Naive thymus-derived CD4-positive, alpha-beta T cell (primary cell): ENCODE measurements at regions of chr12 and their contacts with region 1.

Region 1: GRCh38 chr12:93879476-93880421 is 202.6 kb downstream of the CRADD start:
- DNase-seq: no peak
- ATAC-seq: no peak
- H3K4me3 ChIP-seq: no peak overlapping the region
- H3K4me3 Mint-ChIP-seq: peak overlapping the region in 5 of 10 donors; percentile 5 to 71 (median 39)
- H3K27ac ChIP-seq: no peak overlapping the region
- H3K27ac Mint-ChIP-seq: peak overlapping the region in 8 of 9 donors; percentile 53 to 94 (median 72)
- H3K4me1 ChIP-seq: peaks cover 0 to 9% of the 10 kb centered on the region in 2 donors
- H3K4me1 Mint-ChIP-seq: peaks cover 7 to 39% (median 19%) of the 10 kb centered on the region in 7 donors
- H3K27me3 ChIP-seq: no peaks in the 10 kb centered on the region
- H3K27me3 Mint-ChIP-seq: peaks cover 0 to 3% (median 0%) of the 10 kb centered on the region in 5 donors

Region 2: DNA sequence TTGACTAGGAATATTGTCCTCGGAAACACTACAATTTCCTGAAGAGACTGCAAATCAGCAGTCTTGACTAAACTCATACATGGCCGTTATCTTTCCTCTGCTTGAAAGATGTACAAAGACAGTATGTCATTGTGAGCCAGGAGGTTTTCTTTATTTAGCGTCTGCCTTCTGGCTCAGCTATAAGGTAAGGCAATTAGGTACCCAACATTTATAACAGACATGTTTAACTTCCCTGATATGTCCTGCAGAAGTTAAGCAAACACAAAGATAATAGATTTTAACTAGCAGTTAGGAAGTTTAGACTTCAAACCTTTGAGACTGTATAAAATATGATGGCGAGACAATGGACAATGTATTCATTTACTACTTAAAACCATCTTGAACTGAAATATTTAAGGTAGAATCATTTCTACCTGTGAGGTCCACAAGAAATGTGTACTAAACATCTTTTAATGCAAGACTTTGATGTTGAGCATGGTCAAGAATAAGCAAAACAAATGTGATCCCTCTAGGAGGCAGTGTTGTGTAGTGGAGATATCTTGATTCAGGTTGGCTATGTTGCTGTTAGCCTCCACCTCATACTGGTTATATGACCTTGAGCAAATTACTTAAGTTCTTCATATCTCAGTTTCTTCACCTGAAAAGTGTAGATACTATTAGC is 854.5 kb before region 1 on chr12:
- CTCF ChIA-PET with region 1: no interaction called
- POLR2A ChIA-PET with region 1: no interaction called
- intact Hi-C with region 1: no loop called
- DNase-seq: peak in 3 of 9 donors; percentile 2 to 15 (median 4)
- ATAC-seq: peak; percentile 56
- H3K4me3 ChIP-seq: no peak overlapping the region
- H3K4me3 Mint-ChIP-seq: no peak overlapping the region
- H3K27ac ChIP-seq: no peak overlapping the region
- H3K27ac Mint-ChIP-seq: no peak overlapping the region
- H3K4me1 ChIP-seq: no peaks in the 10 kb centered on the region
- H3K4me1 Mint-ChIP-seq: no peaks in the 10 kb centered on the region
- H3K27me3 ChIP-seq: no peaks in the 10 kb centered on the region
- H3K27me3 Mint-ChIP-seq: peaks cover 0 to 3% (median 0%) of the 10 kb centered on the region in 5 donors

Region 3: GRCh38 chr12:93302331-93303229 is 577.2 kb before region 1 on chr12:
- CTCF ChIA-PET with region 1: no interaction called
- POLR2A ChIA-PET with region 1: no interaction called
- intact Hi-C with region 1: no loop called
- DNase-seq: no peak
- ATAC-seq: no peak
- H3K4me3 ChIP-seq: no peak overlapping the region
- H3K4me3 Mint-ChIP-seq: no peak overlapping the region
- H3K27ac ChIP-seq: no peak overlapping the region
- H3K27ac Mint-ChIP-seq: no peak overlapping the region
- H3K4me1 ChIP-seq: no peaks in the 10 kb centered on the region
- H3K4me1 Mint-ChIP-seq: no peaks in the 10 kb centered on the region
- H3K27me3 ChIP-seq: no peaks in the 10 kb centered on the region
- H3K27me3 Mint-ChIP-seq: peaks cover 0 to 5% (median 0%) of the 10 kb centered on the region in 5 donors

Region 4: GRCh38 chr12:93336291-93336741 is 543.4 kb before region 1 on chr12:
- CTCF ChIA-PET with region 1: no interaction called
- POLR2A ChIA-PET with region 1: no interaction called
- intact Hi-C with region 1: no loop called
- DNase-seq: no peak
- ATAC-seq: no peak
- H3K4me3 ChIP-seq: no peak overlapping the region
- H3K4me3 Mint-ChIP-seq: no peak overlapping the region
- H3K27ac ChIP-seq: no peak overlapping the region
- H3K27ac Mint-ChIP-seq: no peak overlapping the region
- H3K4me1 ChIP-seq: no peaks in the 10 kb centered on the region
- H3K4me1 Mint-ChIP-seq: no peaks in the 10 kb centered on the region
- H3K27me3 ChIP-seq: no peaks in the 10 kb centered on the region
- H3K27me3 Mint-ChIP-seq: no peaks in the 10 kb centered on the region

Region 5: GRCh38 chr12:93624595-93625294 is 255.0 kb before region 1 on chr12:
- CTCF ChIA-PET with region 1: no interaction called
- POLR2A ChIA-PET with region 1: no interaction called
- intact Hi-C with region 1: no loop called
- DNase-seq: no peak
- ATAC-seq: no peak
- H3K4me3 ChIP-seq: no peak overlapping the region
- H3K4me3 Mint-ChIP-seq: no peak overlapping the region
- H3K27ac ChIP-seq: no peak overlapping the region
- H3K27ac Mint-ChIP-seq: no peak overlapping the region
- H3K4me1 ChIP-seq: no peaks in the 10 kb centered on the region
- H3K4me1 Mint-ChIP-seq: no peaks in the 10 kb centered on the region
- H3K27me3 ChIP-seq: no peaks in the 10 kb centered on the region
- H3K27me3 Mint-ChIP-seq: peaks cover 0 to 6% (median 0%) of the 10 kb centered on the region in 5 donors

Region 6: GRCh38 chr12:93766796-93767523 is 112.8 kb before region 1 on chr12:
- CTCF ChIA-PET with region 1: no interaction called
- POLR2A ChIA-PET with region 1: no interaction called
- intact Hi-C with region 1: loop called in 1 of 2 experiments (anchors 1 kb)
- DNase-seq: peak in 6 of 9 donors; percentile 23 to 58 (median 28)
- ATAC-seq: peak; percentile 84
- H3K4me3 ChIP-seq: no peak overlapping the region
- H3K4me3 Mint-ChIP-seq: peak overlapping the region in 5 of 10 donors; percentile 0 to 53 (median 6)
- H3K27ac ChIP-seq: no peak overlapping the region
- H3K27ac Mint-ChIP-seq: peak overlapping the region in 7 of 9 donors; percentile 6 to 74 (median 27)
- H3K4me1 ChIP-seq: no peaks in the 10 kb centered on the region
- H3K4me1 Mint-ChIP-seq: peaks cover 11 to 53% (median 17%) of the 10 kb centered on the region in 7 donors
- H3K27me3 ChIP-seq: no peaks in the 10 kb centered on the region
- H3K27me3 Mint-ChIP-seq: no peaks in the 10 kb centered on the region

Region 7: GRCh38 chr12:93785262-93786010 is 94.3 kb before region 1 on chr12:
- CTCF ChIA-PET with region 1: no interaction called
- POLR2A ChIA-PET with region 1: no interaction called
- intact Hi-C with region 1: loop called in 1 of 2 experiments (anchors 1 kb)
- DNase-seq: peak in 2 of 9 donors; percentile 29 to 48
- ATAC-seq: peak; percentile 77
- H3K4me3 ChIP-seq: no peak overlapping the region
- H3K4me3 Mint-ChIP-seq: peak overlapping the region in 4 of 10 donors; percentile 2 to 87 (median 36)
- H3K27ac ChIP-seq: no peak overlapping the region
- H3K27ac Mint-ChIP-seq: peak overlapping the region in 7 of 9 donors; percentile 35 to 81 (median 58)
- H3K4me1 ChIP-seq: peaks cover 9 to 26% of the 10 kb centered on the region in 2 donors
- H3K4me1 Mint-ChIP-seq: peaks cover 26 to 64% (median 61%) of the 10 kb centered on the region in 7 donors
- H3K27me3 ChIP-seq: no peaks in the 10 kb centered on the region
- H3K27me3 Mint-ChIP-seq: no peaks in the 10 kb centered on the region

Region 8: DNA sequence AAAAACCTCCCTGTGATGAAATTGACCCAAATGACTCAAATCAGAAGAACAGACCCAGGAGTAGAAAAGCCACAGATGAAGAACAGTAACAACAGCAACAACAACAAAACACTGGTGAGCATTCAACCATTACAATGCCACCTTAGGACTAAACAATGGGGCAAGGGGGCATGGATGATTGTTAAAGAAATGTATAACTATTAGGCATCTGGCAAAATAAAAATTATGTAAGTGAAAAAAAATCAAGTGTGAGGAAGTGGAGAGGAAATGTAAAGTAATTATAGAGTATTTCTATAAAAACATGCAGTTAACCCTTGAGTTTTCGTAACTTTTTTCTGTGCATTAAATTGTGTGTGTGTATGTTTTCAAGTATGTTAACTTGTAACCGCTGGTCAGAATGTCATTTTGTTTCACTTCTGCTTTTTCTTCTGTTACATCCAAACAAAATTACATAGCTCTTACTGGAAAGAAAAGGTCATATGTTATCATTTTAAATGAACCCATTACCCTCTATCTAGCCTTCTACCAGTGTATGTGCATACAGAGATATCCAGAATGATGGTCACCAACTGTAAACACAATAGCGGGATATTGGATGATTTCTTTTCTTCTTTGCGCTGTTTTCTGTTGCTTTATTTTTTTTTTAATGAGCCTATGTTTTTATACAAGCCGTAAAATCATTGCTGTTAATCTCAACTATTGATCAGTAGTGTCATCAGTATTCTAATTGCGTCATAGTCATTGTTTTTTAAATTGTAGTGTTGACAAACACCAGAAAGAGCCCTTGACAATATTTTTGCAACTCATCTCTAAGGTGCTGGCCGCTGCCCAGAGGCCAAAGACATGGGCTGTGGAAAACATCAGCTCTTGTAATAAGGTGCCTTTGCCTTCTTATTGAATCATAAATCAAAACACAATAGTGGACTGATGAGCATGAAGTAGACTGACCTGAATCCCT is 32.0 kb before region 1 on chr12:
- CTCF ChIA-PET with region 1: no interaction called
- POLR2A ChIA-PET with region 1: no interaction called
- intact Hi-C with region 1: loop called in 1 of 2 experiments (anchors 1 kb)
- DNase-seq: no peak
- ATAC-seq: peak; percentile 40
- H3K4me3 ChIP-seq: no peak overlapping the region
- H3K4me3 Mint-ChIP-seq: peak overlapping the region in 2 of 10 donors; percentile 59 to 68
- H3K27ac ChIP-seq: no peak overlapping the region
- H3K27ac Mint-ChIP-seq: peak overlapping the region in 3 of 9 donors; percentile 31 to 85 (median 46)
- H3K4me1 ChIP-seq: peaks cover 0 to 13% of the 10 kb centered on the region in 2 donors
- H3K4me1 Mint-ChIP-seq: peaks cover 12 to 61% (median 23%) of the 10 kb centered on the region in 7 donors
- H3K27me3 ChIP-seq: no peaks in the 10 kb centered on the region
- H3K27me3 Mint-ChIP-seq: no peaks in the 10 kb centered on the region

Region 9: GRCh38 chr12:93894391-93895088 is 14.8 kb after region 1 on chr12:
- CTCF ChIA-PET with region 1: no interaction called
- POLR2A ChIA-PET with region 1: no interaction called
- intact Hi-C with region 1: loop called in 1 of 2 experiments (anchors 1 kb)
- DNase-seq: no peak
- ATAC-seq: peak; percentile 31
- H3K4me3 ChIP-seq: no peak overlapping the region
- H3K4me3 Mint-ChIP-seq: no peak overlapping the region
- H3K27ac ChIP-seq: no peak overlapping the region
- H3K27ac Mint-ChIP-seq: peak overlapping the region in 3 of 9 donors; percentile 3 to 58 (median 52)
- H3K4me1 ChIP-seq: peaks cover 0 to 13% of the 10 kb centered on the region in 2 donors
- H3K4me1 Mint-ChIP-seq: peaks cover 11 to 60% (median 33%) of the 10 kb centered on the region in 7 donors
- H3K27me3 ChIP-seq: no peaks in the 10 kb centered on the region
- H3K27me3 Mint-ChIP-seq: no peaks in the 10 kb centered on the region

Region 10: GRCh38 chr12:93922583-93923006 is 42.8 kb after region 1 on chr12:
- CTCF ChIA-PET with region 1: no interaction called
- POLR2A ChIA-PET with region 1: no interaction called
- intact Hi-C with region 1: loop called in 1 of 2 experiments (anchors 5 kb)
- DNase-seq: no peak
- ATAC-seq: no peak
- H3K4me3 ChIP-seq: no peak overlapping the region
- H3K4me3 Mint-ChIP-seq: no peak overlapping the region
- H3K27ac ChIP-seq: no peak overlapping the region
- H3K27ac Mint-ChIP-seq: no peak overlapping the region
- H3K4me1 ChIP-seq: no peaks in the 10 kb centered on the region
- H3K4me1 Mint-ChIP-seq: peaks cover 0 to 19% (median 7%) of the 10 kb centered on the region in 7 donors
- H3K27me3 ChIP-seq: no peaks in the 10 kb centered on the region
- H3K27me3 Mint-ChIP-seq: no peaks in the 10 kb centered on the region

Region 11: GRCh38 chr12:93979189-93979588 is 99.4 kb after region 1 on chr12:
- CTCF ChIA-PET with region 1: no interaction called
- POLR2A ChIA-PET with region 1: no interaction called
- intact Hi-C with region 1: loop called in 1 of 2 experiments (anchors 2 kb)
- DNase-seq: peak in 4 of 9 donors; percentile 21 to 51 (median 31)
- ATAC-seq: peak; percentile 27
- H3K4me3 ChIP-seq: no peak overlapping the region
- H3K4me3 Mint-ChIP-seq: no peak overlapping the region
- H3K27ac ChIP-seq: no peak overlapping the region
- H3K27ac Mint-ChIP-seq: peak overlapping the region in 1 of 9 donors; percentile 27
- H3K4me1 ChIP-seq: no peaks in the 10 kb centered on the region
- H3K4me1 Mint-ChIP-seq: peaks cover 13 to 48% (median 30%) of the 10 kb centered on the region in 7 donors
- H3K27me3 ChIP-seq: no peaks in the 10 kb centered on the region
- H3K27me3 Mint-ChIP-seq: peaks cover 0 to 6% (median 0%) of the 10 kb centered on the region in 5 donors